Activated CD8-positive, alpha-beta T cell treated with anti-CD3 and anti-CD28 coated beads for 36 hours (primary cell): ENCODE measurements at regions of chr5 and their contacts with region 1.

Region 1: GRCh38 chr5:34957857-34958690 is 28.7 kb downstream of the DNAJC21 start:
- DNase-seq: peak; percentile 25
- ATAC-seq: peak; percentile 55
- H3K4me3 Mint-ChIP-seq: no peak overlapping the region
- H3K27ac Mint-ChIP-seq: no peak overlapping the region
- H3K4me1 Mint-ChIP-seq: peaks cover 17% of the 10 kb centered on the region
- H3K27me3 Mint-ChIP-seq: no peaks in the 10 kb centered on the region
- CTCF ChIP-seq: peak; percentile 55

Region 2: DNA sequence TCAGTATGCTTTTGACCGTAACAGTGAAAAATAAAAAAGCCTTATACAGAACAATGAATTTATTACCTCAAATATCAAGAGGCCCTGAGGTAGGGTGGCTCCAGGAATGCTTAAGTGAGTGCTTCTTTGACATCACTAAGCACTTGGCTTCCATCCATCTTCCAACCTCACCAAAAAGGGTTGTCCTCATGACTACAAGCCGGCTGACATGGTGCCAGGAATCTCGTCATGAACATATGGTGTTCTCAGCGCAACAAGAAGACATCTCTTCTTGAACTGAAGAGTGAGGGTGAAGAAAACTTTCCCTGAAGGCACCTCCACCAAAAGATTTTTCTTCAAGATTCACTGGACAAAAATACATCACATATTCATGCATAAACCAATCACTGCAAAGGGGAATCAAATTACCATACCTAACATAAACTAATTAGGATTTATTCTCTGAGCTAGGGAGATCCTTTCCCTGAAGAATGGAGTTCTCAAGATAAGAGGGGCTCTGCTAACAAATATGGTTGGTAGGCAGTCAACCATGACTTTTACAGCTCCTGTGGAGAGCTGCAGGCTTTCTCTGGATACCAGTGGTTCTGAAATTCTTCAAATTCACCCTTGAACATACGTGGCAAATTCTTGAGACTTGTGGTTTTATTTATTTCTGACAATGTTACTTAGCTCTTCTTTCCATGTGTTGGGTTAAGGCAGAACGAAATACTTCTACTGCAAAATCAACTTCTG is 40.1 kb after region 1 on chr5:
- CTCF ChIA-PET with region 1: interaction called, 41 read pairs
- POLR2A ChIA-PET with region 1: no interaction called
- intact Hi-C with region 1: loop called (anchors 5 kb)
- DNase-seq: no peak
- ATAC-seq: no peak
- H3K4me3 Mint-ChIP-seq: no peak overlapping the region
- H3K27ac Mint-ChIP-seq: no peak overlapping the region
- H3K4me1 Mint-ChIP-seq: no peaks in the 10 kb centered on the region
- H3K27me3 Mint-ChIP-seq: peaks cover 22% of the 10 kb centered on the region
- CTCF ChIP-seq: no peak

Region 3: DNA sequence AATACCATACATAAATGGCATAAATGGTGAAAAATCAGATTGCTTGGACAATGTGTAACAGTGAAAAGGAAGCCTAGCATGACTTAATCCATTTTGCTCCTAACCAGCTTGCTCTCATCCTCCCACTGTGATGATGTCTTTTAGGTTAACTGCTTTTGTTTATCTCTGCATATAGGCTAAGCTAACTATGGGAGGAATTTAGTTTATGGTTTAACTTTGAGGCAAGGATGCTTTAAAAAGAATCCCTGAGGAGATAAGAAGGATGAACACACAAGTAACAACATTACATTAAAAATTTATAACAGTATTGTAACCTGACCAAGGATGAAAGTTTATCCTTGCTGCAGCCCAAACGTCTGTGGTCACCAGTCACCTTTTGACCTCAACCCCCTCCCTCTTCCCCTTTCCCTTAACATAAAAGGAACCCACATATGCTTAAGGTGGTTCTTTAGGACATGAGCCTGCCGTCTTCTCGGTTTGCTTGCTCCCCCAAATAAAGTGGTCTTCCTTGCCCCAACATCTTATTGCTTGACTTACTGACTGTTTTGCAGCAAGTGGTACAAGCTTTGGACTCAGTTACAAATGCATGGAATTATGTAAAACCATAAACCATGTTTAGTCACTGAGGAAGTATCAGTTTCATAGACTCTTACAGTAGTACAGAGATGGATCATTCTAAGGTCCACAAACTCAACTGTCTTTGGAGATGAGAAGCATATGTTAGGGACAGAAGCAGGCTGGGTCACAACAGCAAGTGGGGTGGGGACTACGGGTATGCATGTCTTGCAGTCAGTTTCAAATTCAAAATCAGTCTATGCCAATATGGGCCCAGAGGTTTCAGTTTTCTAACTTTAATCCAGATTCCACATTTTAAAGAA is 58.3 kb after region 1 on chr5:
- CTCF ChIA-PET with region 1: no interaction called
- POLR2A ChIA-PET with region 1: no interaction called
- intact Hi-C with region 1: no loop called
- DNase-seq: no peak
- ATAC-seq: no peak
- H3K4me3 Mint-ChIP-seq: no peak overlapping the region
- H3K27ac Mint-ChIP-seq: no peak overlapping the region
- H3K4me1 Mint-ChIP-seq: no peaks in the 10 kb centered on the region
- H3K27me3 Mint-ChIP-seq: peaks cover 17% of the 10 kb centered on the region
- CTCF ChIP-seq: no peak

Region 4: DNA sequence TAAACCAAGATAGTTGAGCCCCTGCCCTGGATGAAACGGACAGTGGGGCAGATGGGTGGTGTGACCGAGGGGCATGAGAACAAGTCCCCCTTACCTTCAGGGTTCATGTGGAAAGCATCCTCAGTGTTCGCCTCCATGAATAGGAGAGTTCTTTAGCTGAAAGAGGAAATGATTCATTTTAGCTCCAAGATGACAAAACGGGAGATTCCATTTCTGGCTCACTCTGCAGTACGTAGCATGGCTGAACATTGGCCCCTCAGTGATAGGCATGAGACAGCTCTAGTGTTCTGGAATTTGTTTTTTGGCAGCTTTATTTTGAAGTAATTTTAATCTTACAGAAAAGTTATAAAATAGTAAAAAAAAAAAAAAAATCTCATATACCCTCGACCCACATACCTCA is 159.9 kb after region 1 on chr5:
- CTCF ChIA-PET with region 1: no interaction called
- POLR2A ChIA-PET with region 1: no interaction called
- intact Hi-C with region 1: no loop called
- DNase-seq: no peak
- ATAC-seq: no peak
- H3K4me3 Mint-ChIP-seq: no peak overlapping the region
- H3K27ac Mint-ChIP-seq: no peak overlapping the region
- H3K4me1 Mint-ChIP-seq: no peaks in the 10 kb centered on the region
- H3K27me3 Mint-ChIP-seq: peaks cover 22% of the 10 kb centered on the region
- CTCF ChIP-seq: no peak

Region 5: GRCh38 chr5:35212122-35212982 is 254.3 kb after region 1 on chr5:
- CTCF ChIA-PET with region 1: no interaction called
- POLR2A ChIA-PET with region 1: no interaction called
- intact Hi-C with region 1: no loop called
- DNase-seq: no peak
- ATAC-seq: peak; percentile 49
- H3K4me3 Mint-ChIP-seq: no peak overlapping the region
- H3K27ac Mint-ChIP-seq: no peak overlapping the region
- H3K4me1 Mint-ChIP-seq: peaks cover 15% of the 10 kb centered on the region
- H3K27me3 Mint-ChIP-seq: peaks cover 21% of the 10 kb centered on the region
- CTCF ChIP-seq: no peak